Activated T-helper 2 cell treated with anti-CD3 and anti-CD28 coated beads, Interferon-gamma antibody, Interleukin-2, Interleukin-4, amounts not matched to agents 10 μg/mL and 5 μg/mL and 100 μg/mL, durations not matched to agents 14 hours and 24 hours and 36 hours (primary cell): ENCODE measurements at regions of chr3 and their contacts with region 1.

Region 1: DNA sequence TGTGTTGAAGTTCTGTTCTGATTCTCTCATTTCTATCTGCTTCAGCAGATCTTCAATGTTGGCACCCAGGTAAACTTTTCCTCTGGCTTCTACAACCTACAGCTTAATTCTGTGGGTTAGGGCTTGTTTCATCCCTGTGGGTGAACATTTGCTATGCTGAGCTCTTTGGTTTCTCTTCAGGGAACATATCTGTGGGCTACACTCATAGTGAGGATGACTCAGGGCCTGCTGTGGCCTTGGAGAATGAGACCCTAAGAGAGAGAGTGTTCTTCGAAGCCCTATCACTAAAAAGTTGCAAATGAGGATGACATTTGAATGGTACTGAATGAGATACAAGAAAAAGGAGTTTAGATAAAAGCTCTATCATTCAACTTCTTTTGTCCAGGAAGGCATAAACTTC is 346.2 kb upstream of the CBLB start:
- DNase-seq: no peak
- H3K4me3 Mint-ChIP-seq: peak overlapping the region; percentile 19
- H3K27ac Mint-ChIP-seq: peak overlapping the region; percentile 79
- H3K4me1 Mint-ChIP-seq: peaks cover 47% of the 10 kb centered on the region
- H3K27me3 Mint-ChIP-seq: no peaks in the 10 kb centered on the region

Region 2: DNA sequence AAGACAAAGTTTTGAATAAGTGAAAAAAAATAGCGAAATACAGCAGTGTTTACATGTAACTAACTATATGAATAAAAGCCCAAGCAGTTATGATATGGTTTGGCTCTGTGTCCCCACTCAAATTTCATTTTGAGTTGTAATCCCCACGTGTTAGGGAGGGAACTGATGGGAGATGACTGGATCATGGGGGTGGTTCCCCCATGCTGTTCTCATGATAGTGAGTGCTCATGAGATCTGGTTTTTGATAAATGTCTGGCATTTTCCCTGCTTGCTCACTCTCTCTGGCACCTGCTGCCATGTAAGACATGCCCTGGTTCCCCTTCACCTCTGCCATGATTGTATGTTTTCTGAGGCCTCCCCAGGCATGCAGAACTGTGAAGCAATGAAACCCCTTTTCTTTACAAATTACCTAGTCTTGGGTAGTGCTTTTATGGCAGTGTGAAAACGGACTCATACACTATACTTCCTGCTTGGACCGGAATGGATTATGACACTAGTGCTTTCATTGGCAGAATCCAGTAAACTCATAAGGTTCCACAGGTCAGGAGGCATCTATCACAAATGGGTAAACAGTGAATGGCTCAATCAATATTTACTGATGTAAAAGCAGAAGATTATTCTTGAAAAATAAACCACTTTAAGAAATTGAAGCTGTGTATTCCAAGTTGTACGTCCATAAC is 538.3 kb before region 1 on chr3:
- intact Hi-C with region 1: loop called (anchors 5 kb)
- DNase-seq: no peak
- H3K4me3 Mint-ChIP-seq: no peak overlapping the region
- H3K27ac Mint-ChIP-seq: peak overlapping the region; percentile 74
- H3K4me1 Mint-ChIP-seq: peaks cover 23% of the 10 kb centered on the region
- H3K27me3 Mint-ChIP-seq: no peaks in the 10 kb centered on the region

Region 3: DNA sequence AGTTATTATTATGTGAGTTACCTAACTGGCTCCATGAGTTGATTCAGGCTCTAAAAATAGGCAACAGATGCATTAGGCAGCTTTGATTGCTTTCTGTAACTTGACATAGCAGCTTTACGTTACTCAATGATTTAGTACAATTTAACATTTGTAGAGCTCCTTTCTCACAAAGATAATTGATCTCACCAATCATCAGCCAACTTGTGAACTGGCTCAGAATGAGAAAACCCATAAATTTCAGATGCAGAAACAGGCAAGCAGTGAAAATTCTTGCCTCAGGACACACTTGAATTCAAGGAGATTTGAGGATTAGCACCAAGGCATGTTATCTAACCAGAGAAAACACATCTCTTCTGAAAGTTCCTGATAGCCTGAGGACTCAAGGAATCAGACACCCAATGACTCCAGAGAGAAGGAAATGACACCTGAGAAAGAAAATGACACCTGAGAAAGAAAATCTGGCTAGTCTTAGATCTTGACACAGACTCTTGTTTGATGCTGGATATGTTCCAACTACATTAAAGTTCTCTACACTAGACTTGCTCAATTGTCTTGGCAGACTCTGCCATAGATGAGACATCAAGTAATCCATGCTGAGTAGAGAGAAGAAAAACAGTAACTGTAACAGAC is 31.2 kb before region 1 on chr3:
- intact Hi-C with region 1: loop called (anchors 2 kb)
- DNase-seq: no peak
- H3K4me3 Mint-ChIP-seq: no peak overlapping the region
- H3K27ac Mint-ChIP-seq: peak overlapping the region; percentile 35
- H3K4me1 Mint-ChIP-seq: peaks cover 51% of the 10 kb centered on the region
- H3K27me3 Mint-ChIP-seq: no peaks in the 10 kb centered on the region

Region 4: GRCh38 chr3:106231086-106231485 is 16.0 kb after region 1 on chr3:
- intact Hi-C with region 1: loop called (anchors 1 kb)
- DNase-seq: no peak
- H3K4me3 Mint-ChIP-seq: peak overlapping the region; percentile 58
- H3K27ac Mint-ChIP-seq: peak overlapping the region; percentile 94
- H3K4me1 Mint-ChIP-seq: peaks cover 43% of the 10 kb centered on the region
- H3K27me3 Mint-ChIP-seq: no peaks in the 10 kb centered on the region

Region 5: DNA sequence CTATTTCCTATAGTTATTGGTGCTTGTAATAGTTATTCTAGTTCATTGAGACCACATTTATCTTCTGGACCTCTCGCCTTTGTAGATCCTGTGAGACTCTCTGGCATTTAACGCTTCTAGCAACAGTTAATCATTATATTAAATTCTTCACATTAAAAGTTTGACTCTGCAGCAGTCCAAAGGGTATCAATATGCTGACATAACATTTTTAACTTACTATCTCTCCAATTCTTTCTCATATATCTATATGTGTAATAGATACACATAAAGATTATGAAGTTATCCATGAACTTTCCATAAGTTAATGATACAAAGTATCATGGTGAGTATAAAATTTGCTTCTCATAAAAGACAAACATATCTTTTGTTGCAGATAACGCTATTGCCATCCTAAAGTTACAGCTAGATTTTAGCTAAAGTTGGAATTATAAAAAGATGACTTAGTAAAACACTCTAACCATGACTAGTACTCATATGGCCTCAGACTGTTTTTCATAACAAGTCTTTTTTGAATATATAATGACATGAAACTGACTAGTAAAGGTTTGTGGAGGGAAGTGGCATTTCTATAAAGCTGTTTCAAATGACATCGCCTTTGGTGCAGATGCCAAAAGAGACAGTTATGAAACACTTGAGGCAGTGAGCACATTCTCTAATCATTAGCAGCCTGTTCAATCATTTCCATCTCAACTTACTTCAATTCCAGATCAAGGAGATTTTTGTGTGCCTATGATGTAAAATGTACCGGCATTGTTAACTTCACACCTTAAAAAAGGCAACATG is 33.0 kb after region 1 on chr3:
- intact Hi-C with region 1: loop called (anchors 5 kb)
- DNase-seq: no peak
- H3K4me3 Mint-ChIP-seq: no peak overlapping the region
- H3K27ac Mint-ChIP-seq: no peak overlapping the region
- H3K4me1 Mint-ChIP-seq: peaks cover 15% of the 10 kb centered on the region
- H3K27me3 Mint-ChIP-seq: no peaks in the 10 kb centered on the region

Region 6: DNA sequence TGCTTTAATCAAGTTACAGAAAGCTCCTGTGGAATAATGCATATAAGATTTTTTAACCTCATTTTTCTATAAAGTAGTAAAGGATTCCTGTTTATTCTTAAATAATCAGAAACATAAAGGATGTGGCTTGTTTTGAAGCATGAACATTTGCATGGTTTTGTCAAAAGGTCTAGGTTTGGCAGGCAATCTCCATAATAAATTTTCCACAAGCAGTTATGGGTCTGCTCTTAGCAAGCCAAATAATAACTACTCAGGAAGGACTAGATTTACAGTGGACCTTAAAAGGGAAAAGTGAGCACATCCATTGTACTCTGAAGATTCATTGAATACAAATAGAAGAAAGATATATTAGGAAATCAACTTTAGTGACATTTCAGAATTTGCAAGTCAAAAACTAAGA is 61.1 kb after region 1 on chr3:
- intact Hi-C with region 1: no loop called
- DNase-seq: no peak
- H3K4me3 Mint-ChIP-seq: no peak overlapping the region
- H3K27ac Mint-ChIP-seq: no peak overlapping the region
- H3K4me1 Mint-ChIP-seq: peaks cover 27% of the 10 kb centered on the region
- H3K27me3 Mint-ChIP-seq: no peaks in the 10 kb centered on the region